Naive thymus-derived CD8-positive, alpha-beta T cell (primary cell): ENCODE measurements at regions of chrX and their contacts with region 1.

Region 1: GRCh38 chrX:107741404-107741790 is 34.2 kb downstream of the TSC22D3 start:
- DNase-seq: no peak
- ATAC-seq: peak; percentile 13 to 23
- H3K4me3 Mint-ChIP-seq: peak overlapping the region; percentile 75 to 93 (median 84)
- H3K27ac Mint-ChIP-seq: peak overlapping the region; percentile 96 to 100 (median 98)
- H3K4me1 Mint-ChIP-seq: peaks cover 20 to 55% (median 45%) of the 10 kb centered on the region in 4 donors
- H3K27me3 Mint-ChIP-seq: peaks cover 0 to 4% (median 0%) of the 10 kb centered on the region in 5 donors

Region 2: GRCh38 chrX:107659768-107660167 is 81.6 kb before region 1 on chrX:
- POLR2A ChIA-PET with region 1: interaction called, 11 read pairs
- DNase-seq: peak in 4 of 10 donors; percentile 3 to 56 (median 48)
- ATAC-seq: peak; percentile 31 to 47
- H3K4me3 Mint-ChIP-seq: no peak overlapping the region
- H3K27ac Mint-ChIP-seq: peak overlapping the region in 1 of 10 donors; percentile 35
- H3K4me1 Mint-ChIP-seq: peaks cover 6 to 24% (median 14%) of the 10 kb centered on the region in 4 donors
- H3K27me3 Mint-ChIP-seq: no peaks in the 10 kb centered on the region

Region 3: DNA sequence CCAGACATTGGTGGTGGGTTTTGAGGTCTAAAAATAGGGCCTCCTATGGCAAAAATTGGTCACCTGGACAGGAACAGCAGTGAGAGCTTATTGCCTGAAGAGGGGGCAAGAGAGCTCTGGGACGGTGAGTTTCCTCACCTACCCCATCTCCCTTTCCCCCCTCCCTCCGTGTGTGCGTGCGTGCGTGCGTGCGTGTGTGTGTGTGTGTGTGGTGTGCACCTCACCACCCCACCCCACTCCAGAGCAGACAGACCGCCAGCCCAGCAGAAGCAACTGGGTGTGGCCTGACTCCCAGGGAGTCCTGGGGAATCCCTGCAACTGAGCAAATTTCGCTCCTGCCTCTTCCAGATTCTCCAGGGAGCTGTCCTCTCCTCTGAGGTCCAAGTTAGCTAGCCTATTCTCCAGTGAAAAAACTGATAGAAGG is 68.4 kb before region 1 on chrX:
- POLR2A ChIA-PET with region 1: interaction called, 43 read pairs
- DNase-seq: peak; percentile 52 to 94 (median 86)
- ATAC-seq: peak; percentile 28 to 51
- H3K4me3 Mint-ChIP-seq: peak overlapping the region; percentile 70 to 94 (median 84)
- H3K27ac Mint-ChIP-seq: peak overlapping the region; percentile 91 to 100 (median 98)
- H3K4me1 Mint-ChIP-seq: peaks cover 17 to 60% (median 52%) of the 10 kb centered on the region in 4 donors
- H3K27me3 Mint-ChIP-seq: peaks cover 0 to 2% (median 0%) of the 10 kb centered on the region in 5 donors